ENCODE measurements at regions of chr20 and their contacts with region 1.

Region 1: GRCh38 chr20:19903168-19903811 is 113.9 kb upstream of the NAA20 start:
- DNase-seq: no peak
- ATAC-seq: peak; percentile 94
- H3K4me3 ChIP-seq: no peak overlapping the region
- H3K27ac ChIP-seq: no peak overlapping the region
- H3K4me1 ChIP-seq: no peaks in the 10 kb centered on the region
- H3K27me3 ChIP-seq: no peaks in the 10 kb centered on the region
- CTCF ChIP-seq: peak; percentile 42 to 85 (median 59); a peak in 5 of 6 replicates
- EP300 ChIP-seq: no peak; a peak in 1 of 4 replicates
- POLR2A ChIP-seq: no peak
- RAD21 ChIP-seq: peak; percentile 84

Region 2: GRCh38 chr20:19867940-19868371 is 35.3 kb before region 1 on chr20:
- CTCF ChIA-PET with region 1: no interaction called
- POLR2A ChIA-PET with region 1: no interaction called
- RAD21 ChIA-PET with region 1: no interaction called
- SMC1A ChIA-PET with region 1: no interaction called
- in situ Hi-C with region 1: no loop called
- intact Hi-C with region 1: no loop called
- DNase-seq: no peak
- ATAC-seq: no peak
- H3K4me3 ChIP-seq: no peak overlapping the region
- H3K27ac ChIP-seq: no peak overlapping the region
- H3K4me1 ChIP-seq: no peaks in the 10 kb centered on the region
- H3K27me3 ChIP-seq: no peaks in the 10 kb centered on the region
- CTCF ChIP-seq: no peak
- EP300 ChIP-seq: no peak
- POLR2A ChIP-seq: no peak
- RAD21 ChIP-seq: no peak

Region 3: GRCh38 chr20:19915111-19915798 is 12.0 kb after region 1 on chr20:
- CTCF ChIA-PET with region 1: interaction called, 20 read pairs
- POLR2A ChIA-PET with region 1: interaction called, 4 read pairs
- RAD21 ChIA-PET with region 1: interaction called, 11 read pairs
- SMC1A ChIA-PET with region 1: interaction called, 13 read pairs
- in situ Hi-C with region 1: no loop called
- intact Hi-C with region 1: no loop called
- DNase-seq: no peak
- ATAC-seq: peak; percentile 52
- H3K4me3 ChIP-seq: no peak overlapping the region
- H3K27ac ChIP-seq: peak overlapping the region; percentile 49
- H3K4me1 ChIP-seq: peaks cover 71% of the 10 kb centered on the region
- H3K27me3 ChIP-seq: no peaks in the 10 kb centered on the region
- CTCF ChIP-seq: no peak
- EP300 ChIP-seq: no peak
- POLR2A ChIP-seq: no peak
- RAD21 ChIP-seq: no peak

Region 4: GRCh38 chr20:20003031-20003954 is 100.0 kb after region 1 on chr20:
- CTCF ChIA-PET with region 1: interaction called, 16 read pairs
- POLR2A ChIA-PET with region 1: no interaction called
- RAD21 ChIA-PET with region 1: interaction called, 11 read pairs
- SMC1A ChIA-PET with region 1: interaction called, 20 read pairs
- in situ Hi-C with region 1: loop called (anchors 5 kb)
- intact Hi-C with region 1: no loop called
- DNase-seq: no peak
- ATAC-seq: peak; percentile 69
- H3K4me3 ChIP-seq: no peak overlapping the region; the same call in 1 of the 2 replicates
- H3K27ac ChIP-seq: no peak overlapping the region
- H3K4me1 ChIP-seq: 0 out of 2 replicates have a peak, but pooled peaks cover 5% of the 10 kb centered on the region
- H3K27me3 ChIP-seq: peaks cover 2 to 8% of the 10 kb centered on the region in 2 experiments; a peak in 3 of 4 replicates
- CTCF ChIP-seq: no peak
- EP300 ChIP-seq: no peak
- POLR2A ChIP-seq: no peak
- RAD21 ChIP-seq: no peak